IMR-90 (cell line): ENCODE measurements at regions of chr17 and their contacts with region 1.

Region 1: DNA sequence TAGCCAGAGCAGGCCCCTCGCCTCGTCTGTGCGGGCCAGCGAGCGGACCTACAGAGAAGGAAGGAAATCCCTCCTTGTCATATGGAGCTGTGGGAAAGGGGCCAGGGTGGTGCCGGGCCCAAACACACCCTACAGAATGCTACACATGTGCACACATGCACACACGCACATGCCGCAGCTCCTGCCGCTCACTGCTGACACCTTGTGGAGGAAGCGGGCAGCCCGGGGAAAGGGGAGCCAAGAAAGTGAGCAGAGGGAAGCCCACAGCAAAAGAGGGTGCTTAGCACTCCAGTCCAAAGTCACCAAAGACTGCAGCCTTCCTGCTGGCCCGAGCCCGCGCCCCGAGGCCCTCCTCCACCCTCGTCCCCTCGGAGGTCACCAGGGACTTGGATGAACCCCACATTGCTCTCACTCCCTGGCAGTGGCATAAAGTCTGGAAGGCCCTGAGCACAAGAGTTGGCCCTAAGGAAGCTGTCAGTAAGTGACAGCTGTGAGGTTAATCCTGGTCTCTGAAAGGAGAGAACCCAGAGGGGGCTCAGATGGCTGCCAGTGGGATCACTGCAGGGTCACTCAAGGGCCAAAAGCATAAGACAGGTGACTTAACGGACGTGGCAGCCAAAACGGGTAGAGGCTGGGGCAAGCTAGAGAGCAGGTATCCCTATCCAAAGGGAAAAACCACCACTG is 68.2 kb downstream of the MYO18A start:
- DNase-seq: peak; percentile 55
- ATAC-seq: peak; percentile 88
- H3K4me3 ChIP-seq: no peak overlapping the region
- H3K27ac ChIP-seq: no peak overlapping the region
- H3K4me1 ChIP-seq: peaks cover 5% of the 10 kb centered on the region
- H3K27me3 ChIP-seq: no peaks in the 10 kb centered on the region
- CTCF ChIP-seq: peak; percentile 85
- POLR2A ChIP-seq: no peak
- RAD21 ChIP-seq: peak; percentile 77

Region 2: DNA sequence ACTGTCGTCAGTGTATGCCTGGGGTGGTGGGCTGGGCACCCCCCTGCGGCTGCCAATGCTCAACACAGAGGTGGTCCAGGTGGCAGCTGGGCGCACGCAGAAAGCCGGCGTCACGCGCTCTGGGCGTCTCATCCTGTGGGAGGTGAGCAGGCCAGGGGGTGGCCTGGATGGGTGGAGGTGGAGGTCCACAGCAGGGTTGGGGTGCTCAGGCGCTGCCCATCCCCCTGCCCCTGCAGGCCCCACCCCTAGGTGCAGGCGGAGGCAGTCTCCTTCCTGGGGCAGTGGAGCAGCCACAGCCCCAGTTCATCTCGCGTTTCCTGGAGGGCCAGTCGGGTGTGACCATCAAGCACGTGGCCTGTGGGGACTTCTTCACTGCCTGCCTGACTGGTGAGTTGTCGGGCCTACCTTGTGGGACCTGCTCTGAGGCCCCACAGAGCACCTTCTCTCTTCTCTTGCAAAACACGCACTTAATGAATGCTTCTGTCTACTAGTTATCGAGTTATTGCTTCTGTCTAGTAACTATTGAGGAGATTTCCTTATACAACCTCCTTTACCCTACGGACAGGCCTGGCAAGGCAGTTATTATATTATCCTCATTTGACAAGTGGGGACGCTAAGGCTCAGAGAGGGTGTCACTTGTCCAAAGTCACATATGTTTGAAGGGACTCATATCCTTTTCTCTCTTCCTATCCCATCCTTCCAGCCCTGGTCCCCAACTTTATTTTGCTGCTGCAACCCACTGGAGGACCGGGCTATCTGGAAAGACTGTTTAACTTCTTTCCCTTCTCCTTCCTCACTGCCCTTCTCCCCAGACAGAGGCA is 373.9 kb before region 1 on chr17:
- CTCF ChIA-PET with region 1: no interaction called
- POLR2A ChIA-PET with region 1: no interaction called
- dilution Hi-C with region 1: no loop called
- in situ Hi-C with region 1: loop called (anchors 10 kb)
- intact Hi-C with region 1: no loop called
- DNase-seq: no peak
- ATAC-seq: no peak
- H3K4me3 ChIP-seq: no peak overlapping the region
- H3K27ac ChIP-seq: no peak overlapping the region
- H3K4me1 ChIP-seq: peaks cover 5% of the 10 kb centered on the region; the same call in 1 of the 2 replicates
- H3K27me3 ChIP-seq: no peaks in the 10 kb centered on the region
- CTCF ChIP-seq: no peak
- POLR2A ChIP-seq: no peak
- RAD21 ChIP-seq: no peak

Region 3: DNA sequence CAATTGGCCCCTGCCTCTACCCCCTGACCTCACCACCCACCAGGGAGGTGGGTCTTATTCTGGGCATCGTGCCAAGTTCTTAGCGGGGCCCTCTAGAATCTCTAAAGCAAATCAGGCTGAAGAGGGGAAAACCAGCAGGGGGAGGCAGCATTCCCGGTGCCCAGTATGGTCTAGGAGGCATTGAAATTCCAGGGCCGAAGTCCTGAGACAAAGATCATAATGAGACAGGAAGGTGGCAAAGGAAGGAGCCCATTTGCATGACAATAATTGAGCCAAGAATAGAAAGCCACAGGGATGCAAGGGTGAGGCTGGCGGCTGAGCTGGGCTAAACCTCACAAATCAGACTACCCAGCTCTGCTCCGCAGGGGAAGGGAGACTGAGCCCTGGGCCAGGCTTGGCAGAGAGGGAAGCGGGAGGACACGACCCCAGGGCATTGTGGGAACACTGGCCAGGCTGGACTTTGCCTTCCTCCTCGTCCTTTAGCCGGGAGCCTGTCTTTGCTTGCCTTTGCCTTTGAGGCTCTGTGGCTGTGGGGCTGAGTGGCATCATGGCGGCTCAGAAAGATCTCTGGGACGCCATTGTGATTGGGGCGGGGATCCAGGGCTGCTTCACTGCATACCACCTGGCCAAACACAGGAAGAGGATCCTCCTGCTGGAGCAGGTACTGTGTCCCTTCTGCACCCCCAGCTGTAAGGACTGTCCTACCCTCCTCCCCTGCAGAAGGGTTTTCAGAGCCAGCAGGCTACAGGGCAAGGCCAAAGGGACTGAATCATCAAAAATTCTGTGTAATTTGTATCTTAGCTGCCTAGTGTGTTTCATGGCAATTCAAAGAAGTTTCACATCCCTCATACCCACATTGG is 69.0 kb before region 1 on chr17 and contains the start of gene PIPOX:
- CTCF ChIA-PET with region 1: no interaction called
- POLR2A ChIA-PET with region 1: no interaction called
- dilution Hi-C with region 1: no loop called
- in situ Hi-C with region 1: loop called (anchors 10 kb)
- intact Hi-C with region 1: no loop called
- DNase-seq: peak; percentile 15
- ATAC-seq: no peak; the same call in 1 of the 2 replicates
- H3K4me3 ChIP-seq: no peak within 1 kb of the TSS
- H3K27ac ChIP-seq: no peak within 1 kb of the TSS
- H3K4me1 ChIP-seq: no peaks in the 10 kb centered on the region
- H3K27me3 ChIP-seq: peaks cover 46% of the 10 kb centered on the region
- CTCF ChIP-seq: no peak
- POLR2A ChIP-seq: no peak
- RAD21 ChIP-seq: no peak
- total RNA-seq, gene PIPOX: 1.1 and 1.3 TPM in 2 replicates